KBM-7 (cell line): ENCODE measurements at regions of chr17 and their contacts with region 1.

Region 1: GRCh38 chr17:27455914-27456680 is at the start of gene KSR1:
- DNase-seq: peak; percentile 83

Region 2: DNA sequence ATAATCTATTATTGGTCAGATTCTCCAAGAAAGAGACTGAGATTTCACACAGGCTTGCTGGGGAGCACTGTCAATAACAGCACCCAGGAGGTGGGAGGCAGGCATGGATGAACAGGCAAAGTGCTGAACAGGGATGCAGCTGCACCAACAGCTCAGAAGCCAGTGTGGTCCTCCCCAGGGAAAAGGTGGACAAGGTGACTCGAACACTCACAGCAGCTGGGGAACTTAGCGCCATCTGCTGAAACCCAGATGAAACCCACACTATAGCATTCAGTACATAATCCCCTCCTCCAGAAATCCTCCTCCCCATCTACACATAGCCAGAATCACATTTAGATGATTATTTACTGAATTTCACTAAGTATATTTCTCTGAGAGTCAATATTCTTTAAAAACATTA is 417.4 kb before region 1 on chr17:
- in situ Hi-C with region 1: no loop called
- DNase-seq: peak; percentile 23

Region 3: GRCh38 chr17:27396941-27397340 is 59.2 kb before region 1 on chr17:
- in situ Hi-C with region 1: loop called (anchors 10 kb)
- DNase-seq: no peak